GM12878 (cell line): ENCODE measurements at regions of chr3 and their contacts with region 1.

Region 1: GRCh38 chr3:195755791-195756676 is 35.3 kb downstream of the MUC20 start:
- DNase-seq: no peak
- ATAC-seq: no peak
- H3K4me3 ChIP-seq: no peak overlapping the region
- H3K27ac ChIP-seq: no peak overlapping the region
- H3K4me1 ChIP-seq: no peaks in the 10 kb centered on the region
- H3K27me3 ChIP-seq: no peaks in the 10 kb centered on the region; a peak in 3 of 4 replicates
- CTCF ChIP-seq: no peak
- EP300 ChIP-seq: no peak
- POLR2A ChIP-seq: no peak
- RAD21 ChIP-seq: no peak

Region 2: GRCh38 chr3:195815169-195815771 is 59.2 kb after region 1 on chr3:
- CTCF ChIA-PET with region 1: no interaction called
- POLR2A ChIA-PET with region 1: no interaction called
- RAD21 ChIA-PET with region 1: no interaction called
- SMC1A ChIA-PET with region 1: no interaction called
- in situ Hi-C with region 1: loop called (anchors 10 kb)
- intact Hi-C with region 1: no loop called
- DNase-seq: no peak
- ATAC-seq: no peak
- H3K4me3 ChIP-seq: no peak overlapping the region
- H3K27ac ChIP-seq: no peak overlapping the region
- H3K4me1 ChIP-seq: no peaks in the 10 kb centered on the region
- H3K27me3 ChIP-seq: no peaks in the 10 kb centered on the region; a peak in 1 of 4 replicates
- CTCF ChIP-seq: no peak
- EP300 ChIP-seq: no peak
- POLR2A ChIP-seq: no peak
- RAD21 ChIP-seq: no peak

Region 3: GRCh38 chr3:195828762-195829161 is 72.7 kb after region 1 on chr3:
- CTCF ChIA-PET with region 1: no interaction called
- POLR2A ChIA-PET with region 1: no interaction called
- RAD21 ChIA-PET with region 1: no interaction called
- SMC1A ChIA-PET with region 1: no interaction called
- in situ Hi-C with region 1: no loop called
- intact Hi-C with region 1: no loop called
- DNase-seq: no peak
- ATAC-seq: no peak
- H3K4me3 ChIP-seq: no peak overlapping the region
- H3K27ac ChIP-seq: no peak overlapping the region
- H3K4me1 ChIP-seq: no peaks in the 10 kb centered on the region
- H3K27me3 ChIP-seq: no peaks in the 10 kb centered on the region; a peak in 1 of 4 replicates
- CTCF ChIP-seq: no peak
- EP300 ChIP-seq: no peak
- POLR2A ChIP-seq: no peak
- RAD21 ChIP-seq: no peak

Region 4: GRCh38 chr3:195839282-195840010 is 83.4 kb after region 1 on chr3:
- CTCF ChIA-PET with region 1: no interaction called
- POLR2A ChIA-PET with region 1: no interaction called
- RAD21 ChIA-PET with region 1: no interaction called
- SMC1A ChIA-PET with region 1: no interaction called
- in situ Hi-C with region 1: loop called (anchors 5 kb)
- intact Hi-C with region 1: no loop called
- DNase-seq: no peak
- ATAC-seq: peak; percentile 18; the same call in 1 of the 3 replicates
- H3K4me3 ChIP-seq: no peak overlapping the region
- H3K27ac ChIP-seq: no peak overlapping the region
- H3K4me1 ChIP-seq: peaks cover 10% of the 10 kb centered on the region
- H3K27me3 ChIP-seq: no peaks in the 10 kb centered on the region; a peak in 2 of 4 replicates
- CTCF ChIP-seq: no peak
- EP300 ChIP-seq: no peak
- POLR2A ChIP-seq: no peak
- RAD21 ChIP-seq: no peak